B cell (primary cell): ENCODE measurements at regions of chr11 and their contacts with region 1.

Region 1: DNA sequence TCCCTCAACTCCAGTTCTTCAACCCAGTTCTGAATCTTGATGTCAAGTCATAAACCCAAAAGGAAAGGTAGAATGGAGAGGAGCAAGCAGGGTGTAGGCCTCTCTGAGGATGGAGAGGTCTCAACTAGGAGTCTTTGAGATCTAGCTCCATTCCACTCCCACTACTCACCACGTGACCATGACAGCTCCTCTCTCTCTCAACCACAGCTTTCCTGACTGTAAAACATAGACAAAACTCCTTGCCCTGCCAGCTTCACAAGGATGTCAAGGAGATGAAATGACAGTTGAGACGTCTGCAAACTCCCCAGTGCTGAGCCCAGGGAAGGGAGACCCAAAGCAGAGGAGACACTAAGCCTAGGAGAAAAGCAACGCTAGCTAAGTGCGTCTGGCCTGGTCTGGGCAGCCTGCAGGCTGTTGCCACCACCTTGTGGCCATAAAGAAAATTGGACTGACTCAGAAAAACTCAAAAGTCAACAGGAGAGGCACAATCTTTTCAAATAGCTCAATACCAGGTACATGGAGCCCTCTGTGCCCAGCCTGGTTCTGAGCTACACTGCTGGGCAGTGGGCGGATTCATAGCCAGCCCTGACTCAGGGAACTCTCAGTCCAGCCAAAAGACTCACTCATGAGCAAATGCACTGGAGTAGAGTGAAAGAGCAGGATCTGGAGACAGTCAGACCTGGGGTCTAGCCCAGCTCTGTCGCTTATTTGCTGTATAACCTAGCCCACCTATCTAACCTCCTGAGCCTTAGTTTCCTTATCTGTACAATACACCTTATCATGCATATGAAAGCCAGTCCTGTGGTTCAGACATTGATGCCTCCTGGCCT is 3.4 kb downstream of the CLPB start:
- DNase-seq: peak; percentile 64
- ATAC-seq: no peak
- H3K4me3 ChIP-seq: no peak overlapping the region
- H3K4me3 Mint-ChIP-seq: no peak overlapping the region
- H3K27ac ChIP-seq: no peak overlapping the region
- H3K27ac Mint-ChIP-seq: peak overlapping the region; percentile 27
- H3K4me1 ChIP-seq: peaks cover 6 to 12% of the 10 kb centered on the region in 2 donors
- H3K4me1 Mint-ChIP-seq: peaks cover 30% of the 10 kb centered on the region
- H3K27me3 ChIP-seq: no peaks in the 10 kb centered on the region
- H3K27me3 Mint-ChIP-seq: no peaks in the 10 kb centered on the region
- CTCF ChIP-seq: peak; percentile 77

Region 2: GRCh38 chr11:71928737-71929452 is 502.1 kb before region 1 on chr11 and contains the start of gene RNF121:
- CTCF ChIA-PET with region 1: no interaction called
- POLR2A ChIA-PET with region 1: no interaction called
- intact Hi-C with region 1: loop called (anchors 1 kb)
- DNase-seq: peak; percentile 97
- ATAC-seq: peak; percentile 91
- H3K4me3 ChIP-seq: peak within 1 kb of the TSS; percentile 89 to 100 (median 99)
- H3K4me3 Mint-ChIP-seq: peak within 1 kb of the TSS; percentile 96
- H3K27ac ChIP-seq: peak within 1 kb of the TSS; percentile 92 to 93
- H3K27ac Mint-ChIP-seq: peak within 1 kb of the TSS; percentile 98
- H3K4me1 ChIP-seq: peaks cover 35 to 46% of the 10 kb centered on the region in 2 donors
- H3K4me1 Mint-ChIP-seq: peaks cover 59% of the 10 kb centered on the region
- H3K27me3 ChIP-seq: no peaks in the 10 kb centered on the region
- H3K27me3 Mint-ChIP-seq: no peaks in the 10 kb centered on the region
- CTCF ChIP-seq: no peak
- total RNA-seq, gene RNF121: 54.5 and 56.0 TPM in 2 replicates

Region 3: GRCh38 chr11:72080256-72080974 is 350.5 kb before region 1 on chr11 and contains the starts of genes LRRC51 and NUMA1:
- CTCF ChIA-PET with region 1: interaction called, 4 read pairs
- POLR2A ChIA-PET with region 1: no interaction called
- intact Hi-C with region 1: loop called (anchors 1 kb)
- DNase-seq: peak; percentile 100
- ATAC-seq: peak; percentile 90
- H3K4me3 ChIP-seq: peak within 1 kb of the TSS; percentile 61 to 84 (median 77)
- H3K4me3 Mint-ChIP-seq: peak within 1 kb of the TSS; percentile 87
- H3K27ac ChIP-seq: peak within 1 kb of the TSS; percentile 78 to 90
- H3K27ac Mint-ChIP-seq: peak within 1 kb of the TSS; percentile 87
- H3K4me1 ChIP-seq: peaks cover 15 to 23% of the 10 kb centered on the region in 2 donors
- H3K4me1 Mint-ChIP-seq: peaks cover 41% of the 10 kb centered on the region
- H3K27me3 ChIP-seq: no peaks in the 10 kb centered on the region
- H3K27me3 Mint-ChIP-seq: no peaks in the 10 kb centered on the region
- CTCF ChIP-seq: no peak
- total RNA-seq, gene LRRC51: 5.5 and 7.7 TPM in 2 replicates
- total RNA-seq, gene NUMA1: 297 and 300 TPM in 2 replicates

Region 4: DNA sequence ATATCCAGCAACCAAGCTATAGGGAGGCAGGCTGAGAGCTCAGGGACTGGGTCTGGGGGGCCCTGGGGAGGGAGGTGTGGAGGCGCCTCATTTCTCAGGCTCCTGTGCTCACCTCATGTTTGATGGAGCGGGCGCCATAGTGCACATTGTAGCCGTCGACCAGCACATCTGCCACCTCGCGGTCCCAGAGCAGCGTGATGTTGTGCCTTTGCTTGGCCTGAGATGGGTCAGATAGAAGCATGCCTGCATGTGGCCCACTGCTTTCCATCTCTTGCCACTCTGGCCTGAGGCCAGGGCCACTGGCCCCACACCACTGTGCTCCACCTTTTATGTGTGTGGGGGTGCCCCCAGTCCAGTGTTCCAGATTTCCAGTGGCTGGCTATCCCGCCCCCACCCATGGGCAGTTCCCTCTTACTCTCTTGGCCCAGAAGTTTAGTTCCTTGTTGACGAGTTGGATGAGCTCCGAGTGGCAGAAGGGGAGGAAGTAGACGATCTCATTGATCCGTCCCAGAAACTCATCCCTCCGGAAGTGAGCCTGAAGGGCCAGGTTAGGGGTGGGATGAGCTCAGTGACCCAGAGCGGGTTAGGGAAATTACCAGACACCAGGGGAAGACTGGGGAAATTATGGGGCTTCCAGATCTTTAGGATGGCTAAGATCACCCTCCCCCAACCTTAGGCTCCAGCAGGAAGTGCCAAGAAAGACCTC is 136.9 kb before region 1 on chr11:
- CTCF ChIA-PET with region 1: interaction called, 16 read pairs
- POLR2A ChIA-PET with region 1: no interaction called
- intact Hi-C with region 1: no loop called
- DNase-seq: no peak
- ATAC-seq: no peak
- H3K4me3 ChIP-seq: no peak overlapping the region
- H3K4me3 Mint-ChIP-seq: no peak overlapping the region
- H3K27ac ChIP-seq: no peak overlapping the region
- H3K27ac Mint-ChIP-seq: no peak overlapping the region
- H3K4me1 ChIP-seq: peaks cover 9 to 15% of the 10 kb centered on the region in 2 donors
- H3K4me1 Mint-ChIP-seq: peaks cover 20% of the 10 kb centered on the region
- H3K27me3 ChIP-seq: no peaks in the 10 kb centered on the region
- H3K27me3 Mint-ChIP-seq: no peaks in the 10 kb centered on the region
- CTCF ChIP-seq: no peak

Region 5: DNA sequence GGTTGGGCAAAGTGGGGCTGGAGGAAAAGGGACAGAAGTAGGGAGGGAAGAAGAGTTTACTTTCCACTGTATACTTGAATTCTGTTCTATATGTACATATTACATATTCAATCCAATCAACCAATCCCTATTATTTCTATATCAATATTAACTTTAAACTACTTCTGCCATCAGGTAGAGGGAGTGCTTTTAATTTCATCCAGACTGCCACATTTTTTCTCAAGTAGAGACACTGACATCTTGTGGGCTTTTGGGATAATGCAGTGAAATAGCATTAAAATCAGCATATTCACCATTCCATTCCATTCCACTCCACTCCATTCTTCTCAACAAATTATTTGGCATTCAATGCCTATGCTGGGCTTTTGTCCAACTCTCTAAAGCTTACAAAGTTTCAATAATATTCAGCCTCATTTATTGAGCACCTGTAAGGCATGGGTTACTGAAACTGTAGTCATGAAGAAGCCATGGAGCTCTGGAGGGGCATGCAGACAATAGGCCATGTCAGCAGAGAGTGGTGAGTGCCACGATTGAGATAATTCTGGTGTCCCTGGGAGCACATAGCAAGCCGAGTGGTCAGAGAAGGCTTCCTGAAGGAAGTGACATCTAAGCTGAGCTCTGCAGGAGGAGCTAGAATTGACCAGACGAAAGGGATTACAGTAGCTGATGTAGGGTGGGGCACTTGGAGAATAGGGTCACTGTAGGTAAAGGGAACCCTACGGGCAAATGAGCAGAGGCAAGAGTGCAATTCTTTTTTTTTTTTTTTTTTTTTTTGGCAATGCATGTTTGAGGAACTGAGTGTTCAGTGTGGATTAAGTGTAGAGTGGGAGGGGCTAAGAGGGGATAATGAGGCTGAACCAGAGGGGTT is 16.2 kb after region 1 on chr11:
- CTCF ChIA-PET with region 1: interaction called, 64 read pairs
- POLR2A ChIA-PET with region 1: no interaction called
- intact Hi-C with region 1: loop called (anchors 1 kb)
- DNase-seq: peak; percentile 67
- ATAC-seq: peak; percentile 60
- H3K4me3 ChIP-seq: no peak overlapping the region
- H3K4me3 Mint-ChIP-seq: no peak overlapping the region
- H3K27ac ChIP-seq: no peak overlapping the region
- H3K27ac Mint-ChIP-seq: no peak overlapping the region
- H3K4me1 ChIP-seq: no peaks in the 10 kb centered on the region
- H3K4me1 Mint-ChIP-seq: peaks cover 5% of the 10 kb centered on the region
- H3K27me3 ChIP-seq: peaks cover 0 to 3% (median 0%) of the 10 kb centered on the region in 4 experiments
- H3K27me3 Mint-ChIP-seq: peaks cover 23% of the 10 kb centered on the region
- CTCF ChIP-seq: peak; percentile 89

Region 6: DNA sequence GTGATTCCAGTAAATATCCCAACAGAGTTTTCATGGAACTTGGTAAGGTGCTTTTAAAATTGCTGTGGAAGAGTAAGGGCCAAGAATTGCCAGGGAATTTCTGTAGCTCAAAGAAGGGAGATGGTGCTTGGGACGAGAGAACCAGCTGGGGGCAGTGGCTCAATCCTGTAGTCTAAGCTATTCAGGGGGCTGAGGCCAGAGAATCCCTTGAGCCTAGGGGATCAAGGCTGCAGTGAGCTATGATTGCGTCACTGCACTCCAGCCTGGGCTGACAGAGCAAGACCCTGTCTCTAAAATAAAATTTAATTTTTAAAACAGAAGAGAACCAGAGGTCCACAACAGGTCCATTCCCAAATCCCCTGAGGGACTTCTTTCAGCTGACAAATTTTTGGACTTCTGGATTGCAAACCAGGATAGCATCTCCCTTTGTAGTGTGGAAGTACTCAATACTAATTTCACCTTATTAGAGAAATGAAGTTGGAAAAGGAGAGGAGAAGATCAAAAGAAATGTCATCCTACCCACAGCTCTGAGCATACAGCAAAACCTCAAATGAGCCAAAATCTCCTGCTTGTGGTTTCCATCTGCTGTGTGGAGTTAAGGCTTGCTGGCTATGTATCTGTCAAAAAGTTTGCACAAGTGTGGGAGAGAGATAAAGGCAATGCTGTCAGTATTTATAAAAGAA is 62.6 kb after region 1 on chr11:
- CTCF ChIA-PET with region 1: no interaction called
- POLR2A ChIA-PET with region 1: no interaction called
- intact Hi-C with region 1: no loop called
- DNase-seq: no peak
- ATAC-seq: no peak
- H3K4me3 ChIP-seq: no peak overlapping the region
- H3K4me3 Mint-ChIP-seq: no peak overlapping the region
- H3K27ac ChIP-seq: no peak overlapping the region
- H3K27ac Mint-ChIP-seq: no peak overlapping the region
- H3K4me1 ChIP-seq: no peaks in the 10 kb centered on the region
- H3K4me1 Mint-ChIP-seq: no peaks in the 10 kb centered on the region
- H3K27me3 ChIP-seq: no peaks in the 10 kb centered on the region
- H3K27me3 Mint-ChIP-seq: peaks cover 4% of the 10 kb centered on the region
- CTCF ChIP-seq: no peak

Region 7: GRCh38 chr11:74398244-74399159 is 1967.5 kb after region 1 on chr11 and contains the start of gene PGM2L1:
- CTCF ChIA-PET with region 1: no interaction called
- POLR2A ChIA-PET with region 1: no interaction called
- intact Hi-C with region 1: loop called (anchors 5 kb)
- DNase-seq: peak; percentile 98
- ATAC-seq: peak; percentile 86
- H3K4me3 ChIP-seq: peak within 1 kb of the TSS; percentile 58 to 94 (median 89)
- H3K4me3 Mint-ChIP-seq: peak within 1 kb of the TSS; percentile 95
- H3K27ac ChIP-seq: peak within 1 kb of the TSS; percentile 66 to 87
- H3K27ac Mint-ChIP-seq: peak within 1 kb of the TSS; percentile 98
- H3K4me1 ChIP-seq: peaks cover 10% of the 10 kb centered on the region in 2 donors
- H3K4me1 Mint-ChIP-seq: peaks cover 14% of the 10 kb centered on the region
- H3K27me3 ChIP-seq: no peaks in the 10 kb centered on the region
- H3K27me3 Mint-ChIP-seq: no peaks in the 10 kb centered on the region
- CTCF ChIP-seq: no peak
- total RNA-seq, gene PGM2L1: 8.4 and 12.6 TPM in 2 replicates